K562 (cell line): ENCODE measurements at regions of chr10 and their contacts with region 1.

Region 1: DNA sequence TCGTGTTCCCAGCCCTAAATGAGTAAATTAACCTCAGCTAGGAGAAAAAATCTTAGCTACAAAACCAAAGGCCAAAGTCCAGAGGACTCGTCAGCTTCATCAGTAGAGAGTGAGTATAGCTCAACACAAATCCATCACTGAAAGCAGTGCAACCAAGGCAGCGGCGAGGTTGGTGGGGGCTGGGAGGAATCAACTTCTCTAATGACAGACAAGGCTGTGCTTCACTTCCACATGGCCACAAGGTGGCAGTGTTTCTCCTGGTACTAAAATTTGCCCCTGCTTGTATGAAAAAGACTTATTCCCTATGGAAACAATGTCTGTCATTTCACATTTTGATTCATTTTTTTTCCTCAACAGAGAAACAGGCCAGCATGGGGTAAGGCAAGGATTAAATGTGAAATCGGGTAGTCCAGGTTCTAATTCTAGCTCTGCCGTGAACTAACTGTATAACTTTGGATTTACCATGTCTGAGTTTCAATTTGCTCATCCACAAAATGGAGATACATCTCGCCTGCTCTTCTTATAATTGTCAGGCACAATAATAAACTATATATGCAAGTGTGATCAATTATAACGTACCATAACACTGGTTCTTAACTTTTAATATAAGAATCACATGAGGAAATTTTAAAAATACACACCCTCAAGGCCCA is 39.3 kb downstream of the FAS start:
- DNase-seq: peak; percentile 32 to 69 (median 38)
- ATAC-seq: peak; percentile 86
- H3K4me3 ChIP-seq: no peak overlapping the region
- H3K27ac ChIP-seq: no peak overlapping the region
- H3K4me1 ChIP-seq: no peaks in the 10 kb centered on the region; a peak in 1 of 5 replicates
- H3K27me3 ChIP-seq: no peaks in the 10 kb centered on the region
- CTCF ChIP-seq: peak; percentile 62 to 78 (median 69); a peak in 5 of 6 replicates
- EP300 ChIP-seq: no peak
- POLR2A ChIP-seq: no peak
- RAD21 ChIP-seq: peak; percentile 87 to 91

Region 2: DNA sequence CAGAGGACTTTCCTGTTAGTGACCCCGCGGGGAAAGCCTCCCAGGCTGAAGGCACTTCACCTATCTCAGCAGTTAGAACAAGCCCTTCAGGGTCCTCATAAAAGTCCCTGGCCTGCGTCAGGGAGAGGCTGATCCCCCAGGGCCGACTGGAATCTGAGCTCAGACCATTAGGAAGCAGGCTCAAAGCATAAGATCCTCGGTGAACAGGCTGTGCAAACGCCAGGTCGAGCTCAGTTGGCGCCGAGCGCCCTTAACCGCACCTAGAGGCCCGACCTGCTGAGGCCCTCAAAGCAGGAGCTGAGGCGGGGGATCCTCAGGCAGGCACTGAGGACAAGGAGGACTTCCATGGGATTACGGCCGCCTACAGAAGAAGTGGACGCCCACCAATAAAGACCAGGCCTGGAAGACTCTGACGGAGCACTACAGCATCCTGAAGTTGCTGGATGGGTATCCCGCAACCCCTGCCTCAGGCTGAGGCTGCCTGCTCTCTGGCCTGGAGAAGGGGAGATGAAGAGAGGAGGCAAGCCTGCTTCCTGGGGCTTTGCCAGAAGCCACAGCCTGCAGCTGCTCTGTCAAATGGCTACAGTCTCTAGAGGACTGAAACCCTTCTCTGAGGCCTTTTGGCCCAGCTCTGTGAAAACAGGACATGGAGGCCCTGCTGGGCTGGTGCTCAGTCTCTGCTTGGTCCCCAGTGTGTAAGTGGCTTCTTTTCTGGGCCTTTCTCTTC is 413.5 kb before region 1 on chr10:
- CTCF ChIA-PET with region 1: no interaction called
- POLR2A ChIA-PET with region 1: no interaction called
- in situ Hi-C with region 1: no loop called
- intact Hi-C with region 1: no loop called
- DNase-seq: no peak
- ATAC-seq: no peak
- H3K4me3 ChIP-seq: no peak overlapping the region
- H3K27ac ChIP-seq: no peak overlapping the region
- H3K4me1 ChIP-seq: no peaks in the 10 kb centered on the region
- H3K27me3 ChIP-seq: no peaks in the 10 kb centered on the region
- CTCF ChIP-seq: no peak
- EP300 ChIP-seq: no peak
- POLR2A ChIP-seq: no peak
- RAD21 ChIP-seq: no peak

Region 3: DNA sequence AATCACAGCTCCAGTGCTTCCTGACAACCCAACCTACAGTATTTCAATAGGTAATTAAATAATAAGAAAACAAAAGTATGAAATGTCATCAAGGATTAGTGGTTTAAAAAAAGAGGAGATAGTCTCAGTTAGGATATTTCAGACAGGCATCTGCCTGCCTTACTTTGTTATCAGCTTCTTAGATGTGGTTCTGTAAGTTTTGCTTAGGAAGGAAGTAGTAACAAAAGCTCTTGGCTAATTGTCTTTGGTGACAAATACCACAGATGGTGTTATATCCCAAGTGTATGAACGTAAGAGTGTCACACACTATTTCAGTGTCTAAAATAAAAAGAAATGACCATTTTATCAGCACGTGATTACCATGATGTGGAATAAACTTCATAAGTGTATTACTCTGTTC is 67.6 kb before region 1 on chr10:
- CTCF ChIA-PET with region 1: no interaction called
- POLR2A ChIA-PET with region 1: no interaction called
- in situ Hi-C with region 1: no loop called
- intact Hi-C with region 1: no loop called
- DNase-seq: no peak
- ATAC-seq: no peak
- H3K4me3 ChIP-seq: no peak overlapping the region
- H3K27ac ChIP-seq: no peak overlapping the region
- H3K4me1 ChIP-seq: no peaks in the 10 kb centered on the region
- H3K27me3 ChIP-seq: no peaks in the 10 kb centered on the region
- CTCF ChIP-seq: no peak
- EP300 ChIP-seq: no peak
- POLR2A ChIP-seq: no peak
- RAD21 ChIP-seq: no peak

Region 4: DNA sequence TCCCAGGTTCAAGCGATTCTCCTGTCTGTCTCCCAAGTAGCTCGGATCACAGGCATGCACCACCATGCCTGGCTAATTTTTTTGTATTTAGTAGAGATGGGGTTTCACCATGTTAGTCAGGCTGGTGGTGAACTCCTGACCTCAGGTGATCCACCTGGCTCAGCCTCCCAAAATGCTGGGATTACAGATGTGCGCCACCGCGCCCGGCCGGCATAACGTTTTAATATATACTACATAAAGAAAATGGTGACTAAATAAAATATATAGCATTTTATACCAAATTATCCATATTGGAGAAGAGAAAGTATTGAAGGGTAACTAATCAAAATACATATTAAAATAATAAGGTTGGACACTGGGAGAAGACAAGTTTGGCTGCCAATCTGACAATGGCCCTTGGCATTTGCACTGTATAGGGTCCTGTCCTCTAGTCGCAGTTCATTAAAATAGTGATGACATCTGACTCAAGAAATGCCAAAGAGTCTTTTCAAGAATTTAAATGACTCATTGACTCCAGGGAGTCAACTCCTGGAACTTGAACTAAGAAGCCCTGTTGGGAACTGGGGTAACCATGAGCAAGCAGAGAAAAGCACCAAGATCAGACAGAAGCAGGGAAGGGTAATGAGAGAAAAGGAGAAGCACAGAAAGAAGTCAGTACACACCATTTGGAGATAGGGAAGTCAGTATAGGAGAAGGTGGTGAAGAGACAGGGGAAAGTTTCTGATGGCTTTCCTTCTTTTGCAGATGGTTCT is 86.1 kb after region 1 on chr10:
- CTCF ChIA-PET with region 1: no interaction called
- POLR2A ChIA-PET with region 1: no interaction called
- in situ Hi-C with region 1: no loop called
- intact Hi-C with region 1: loop called (anchors 10 kb)
- DNase-seq: no peak
- ATAC-seq: no peak
- H3K4me3 ChIP-seq: no peak overlapping the region
- H3K27ac ChIP-seq: no peak overlapping the region
- H3K4me1 ChIP-seq: no peaks in the 10 kb centered on the region
- H3K27me3 ChIP-seq: no peaks in the 10 kb centered on the region
- CTCF ChIP-seq: no peak
- EP300 ChIP-seq: no peak
- POLR2A ChIP-seq: no peak
- RAD21 ChIP-seq: no peak